ENCODE measurements at regions of chr17 and their contacts with region 1.

Region 1: DNA sequence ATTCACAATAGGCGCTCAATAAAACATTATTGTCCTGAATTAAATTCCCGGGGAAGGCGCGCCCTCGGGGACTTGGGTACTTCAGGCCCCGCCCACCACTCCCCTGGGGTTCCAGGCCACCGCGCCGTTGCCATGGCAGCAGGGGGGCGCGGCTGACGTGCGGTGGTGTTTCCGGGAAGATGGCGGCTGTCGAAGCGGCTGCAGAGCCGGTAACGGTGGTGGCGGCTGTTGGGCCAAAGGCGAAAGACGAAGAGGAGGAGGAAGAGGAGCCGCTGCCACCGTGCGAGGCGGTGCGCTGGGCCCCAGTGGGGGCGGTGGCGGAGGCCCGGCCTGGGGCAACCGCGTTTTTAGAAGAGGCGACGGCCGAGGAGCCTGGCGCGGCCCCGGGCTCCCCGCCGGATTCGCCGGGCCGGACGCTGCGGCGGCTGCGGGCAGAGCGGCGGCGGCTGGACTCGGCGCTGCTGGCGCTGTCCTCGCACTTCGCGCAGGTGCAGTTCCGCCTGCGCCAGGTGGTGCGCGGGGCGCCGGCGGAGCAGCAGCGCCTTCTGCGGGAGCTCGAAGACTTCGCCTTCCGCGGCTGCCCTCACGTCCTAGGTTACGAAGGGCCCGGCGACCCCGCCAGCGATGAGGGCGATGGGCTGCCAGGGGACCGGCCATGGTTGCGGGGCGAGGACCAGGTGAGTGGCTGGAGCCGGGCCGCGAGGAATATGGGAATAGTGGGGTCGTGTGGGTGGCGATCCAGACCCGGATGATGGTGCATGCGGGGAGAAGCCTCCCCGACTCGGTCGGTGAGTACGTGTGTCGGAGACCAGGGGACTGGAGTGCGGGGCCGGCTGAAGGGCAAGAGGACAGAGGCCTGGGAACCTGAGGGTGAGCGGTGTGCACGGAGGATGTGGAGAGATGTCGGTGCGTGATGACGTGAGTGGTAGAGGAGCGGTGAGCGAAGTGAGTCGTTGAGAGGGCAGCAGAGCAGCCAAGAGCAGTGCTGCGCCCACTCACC is at the start of gene RUNDC1:
- DNase-seq: peak; percentile 79 to 96 (median 88)
- ATAC-seq: peak; percentile 86
- H3K4me3 ChIP-seq: peak within 1 kb of the TSS; percentile 87
- H3K4me3 Mint-ChIP-seq: peak within 1 kb of the TSS; percentile 95
- H3K27ac ChIP-seq: peak within 1 kb of the TSS; percentile 58 to 66
- H3K27ac Mint-ChIP-seq: peak within 1 kb of the TSS; percentile 84
- H3K4me1 ChIP-seq: peaks cover 32% of the 10 kb centered on the region
- H3K4me1 Mint-ChIP-seq: peaks cover 44% of the 10 kb centered on the region
- H3K27me3 ChIP-seq: no peaks in the 10 kb centered on the region
- H3K27me3 Mint-ChIP-seq: no peaks in the 10 kb centered on the region
- CTCF ChIP-seq: no peak
- total RNA-seq, gene RUNDC1: 11.6 to 11.7 TPM

Region 2: GRCh38 chr17:42405963-42406495 is 574.7 kb before region 1 on chr17:
- CTCF ChIA-PET with region 1: no interaction called
- POLR2A ChIA-PET with region 1: no interaction called
- intact Hi-C with region 1: no loop called
- DNase-seq: peak; percentile 70 to 90 (median 82)
- ATAC-seq: peak; percentile 88
- H3K4me3 ChIP-seq: no peak overlapping the region
- H3K4me3 Mint-ChIP-seq: no peak overlapping the region
- H3K27ac ChIP-seq: no peak overlapping the region
- H3K27ac Mint-ChIP-seq: no peak overlapping the region
- H3K4me1 ChIP-seq: peaks cover 13% of the 10 kb centered on the region
- H3K4me1 Mint-ChIP-seq: peaks cover 11% of the 10 kb centered on the region
- H3K27me3 ChIP-seq: no peaks in the 10 kb centered on the region
- H3K27me3 Mint-ChIP-seq: no peaks in the 10 kb centered on the region
- CTCF ChIP-seq: peak; percentile 76

Region 3: GRCh38 chr17:42964161-42964932 is 16.4 kb before region 1 on chr17 and contains the start of gene AARSD1:
- CTCF ChIA-PET with region 1: interaction called, 3 read pairs
- POLR2A ChIA-PET with region 1: no interaction called
- intact Hi-C with region 1: loop called in 1 of 2 experiments (anchors 1 kb)
- DNase-seq: peak; percentile 82 to 96 (median 86)
- ATAC-seq: peak; percentile 98
- H3K4me3 ChIP-seq: peak within 1 kb of the TSS; percentile 73
- H3K4me3 Mint-ChIP-seq: peak within 1 kb of the TSS; percentile 86
- H3K27ac ChIP-seq: peak within 1 kb of the TSS; percentile 38 to 54
- H3K27ac Mint-ChIP-seq: peak within 1 kb of the TSS; percentile 79
- H3K4me1 ChIP-seq: peaks cover 20% of the 10 kb centered on the region
- H3K4me1 Mint-ChIP-seq: peaks cover 14% of the 10 kb centered on the region
- H3K27me3 ChIP-seq: no peaks in the 10 kb centered on the region
- H3K27me3 Mint-ChIP-seq: no peaks in the 10 kb centered on the region
- CTCF ChIP-seq: no peak
- total RNA-seq, gene AARSD1: 60.4 to 70.8 TPM